ENCODE measurements at regions of chr11 and their contacts with region 1.

Region 1: GRCh38 chr11:76680518-76681425 is 10.2 kb upstream of the LRRC32 start:
- DNase-seq: peak; percentile 82
- H3K4me3 ChIP-seq: no peak overlapping the region
- H3K27ac ChIP-seq: no peak overlapping the region
- H3K4me1 ChIP-seq: no peaks in the 10 kb centered on the region
- H3K27me3 ChIP-seq: no peaks in the 10 kb centered on the region; the same call in 1 of the 2 replicates

Region 2: DNA sequence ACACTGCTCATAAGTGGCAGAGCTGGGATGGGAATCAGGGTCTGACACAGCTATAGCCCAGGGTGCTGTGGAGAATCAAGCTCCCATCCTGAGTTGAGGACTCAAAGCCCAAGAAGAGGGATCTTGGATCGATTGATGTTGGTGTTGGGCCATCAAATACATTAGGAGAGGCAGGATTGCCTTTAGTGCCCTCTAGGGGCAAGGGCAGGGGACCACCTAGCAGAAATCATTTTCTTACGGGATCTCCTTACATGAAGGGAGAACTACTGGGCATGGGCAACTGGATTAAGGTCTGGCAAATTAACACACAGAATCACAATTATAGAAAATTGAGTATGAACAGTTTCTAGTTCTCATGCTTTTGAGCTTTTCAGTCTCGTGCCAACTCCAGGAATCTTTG is 260.9 kb before region 1 on chr11:
- in situ Hi-C with region 1: no loop called
- DNase-seq: peak; percentile 3
- H3K4me3 ChIP-seq: no peak overlapping the region
- H3K27ac ChIP-seq: no peak overlapping the region
- H3K4me1 ChIP-seq: no peaks in the 10 kb centered on the region
- H3K27me3 ChIP-seq: peaks cover 12% of the 10 kb centered on the region; the same call in 1 of the 2 replicates

Region 3: DNA sequence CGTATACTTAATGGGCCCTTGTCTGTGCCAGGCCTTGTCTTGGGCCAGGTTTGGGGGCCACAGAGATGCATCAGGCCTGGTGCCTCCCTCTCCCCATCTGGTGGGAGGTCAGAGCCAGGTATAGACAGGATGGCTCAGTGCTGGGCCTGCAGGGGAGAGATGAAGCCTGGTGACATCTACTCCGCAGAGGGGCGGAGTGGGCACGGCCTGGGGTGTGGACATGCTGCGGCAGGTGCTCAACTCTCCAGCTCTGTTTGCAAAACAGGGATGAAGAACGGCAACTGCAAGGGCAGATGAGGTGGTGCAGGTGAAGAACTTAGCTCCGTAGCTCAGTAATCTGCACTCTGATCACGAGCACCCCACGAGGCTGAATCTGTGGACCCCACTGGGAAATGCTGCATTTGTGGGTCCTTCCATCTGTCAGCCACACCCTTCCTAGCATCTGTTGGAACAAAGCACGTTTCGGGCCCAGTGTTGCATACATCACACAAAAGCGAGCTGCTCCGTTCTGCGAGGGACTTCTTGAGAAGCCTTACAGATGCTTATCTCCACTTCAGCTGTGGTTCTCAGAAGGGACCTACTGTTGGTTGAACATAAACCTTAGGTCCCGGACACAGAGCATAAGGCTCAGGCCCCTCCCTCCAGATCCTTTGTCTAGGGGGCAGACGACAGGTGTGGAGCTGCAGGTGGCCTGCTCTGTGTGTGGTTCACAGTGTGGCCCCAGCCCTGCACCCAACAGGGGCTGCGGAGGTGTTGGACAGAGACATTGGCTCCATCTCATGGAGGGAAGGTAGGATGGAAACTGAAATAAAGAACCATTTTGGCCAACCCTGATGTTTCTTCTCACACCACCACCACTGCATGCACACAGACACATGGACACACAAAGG is 88.5 kb before region 1 on chr11:
- in situ Hi-C with region 1: loop called (anchors 5 kb)
- DNase-seq: no peak
- H3K4me3 ChIP-seq: no peak overlapping the region
- H3K27ac ChIP-seq: no peak overlapping the region
- H3K4me1 ChIP-seq: no peaks in the 10 kb centered on the region
- H3K27me3 ChIP-seq: no peaks in the 10 kb centered on the region; the same call in 1 of the 2 replicates

Region 4: DNA sequence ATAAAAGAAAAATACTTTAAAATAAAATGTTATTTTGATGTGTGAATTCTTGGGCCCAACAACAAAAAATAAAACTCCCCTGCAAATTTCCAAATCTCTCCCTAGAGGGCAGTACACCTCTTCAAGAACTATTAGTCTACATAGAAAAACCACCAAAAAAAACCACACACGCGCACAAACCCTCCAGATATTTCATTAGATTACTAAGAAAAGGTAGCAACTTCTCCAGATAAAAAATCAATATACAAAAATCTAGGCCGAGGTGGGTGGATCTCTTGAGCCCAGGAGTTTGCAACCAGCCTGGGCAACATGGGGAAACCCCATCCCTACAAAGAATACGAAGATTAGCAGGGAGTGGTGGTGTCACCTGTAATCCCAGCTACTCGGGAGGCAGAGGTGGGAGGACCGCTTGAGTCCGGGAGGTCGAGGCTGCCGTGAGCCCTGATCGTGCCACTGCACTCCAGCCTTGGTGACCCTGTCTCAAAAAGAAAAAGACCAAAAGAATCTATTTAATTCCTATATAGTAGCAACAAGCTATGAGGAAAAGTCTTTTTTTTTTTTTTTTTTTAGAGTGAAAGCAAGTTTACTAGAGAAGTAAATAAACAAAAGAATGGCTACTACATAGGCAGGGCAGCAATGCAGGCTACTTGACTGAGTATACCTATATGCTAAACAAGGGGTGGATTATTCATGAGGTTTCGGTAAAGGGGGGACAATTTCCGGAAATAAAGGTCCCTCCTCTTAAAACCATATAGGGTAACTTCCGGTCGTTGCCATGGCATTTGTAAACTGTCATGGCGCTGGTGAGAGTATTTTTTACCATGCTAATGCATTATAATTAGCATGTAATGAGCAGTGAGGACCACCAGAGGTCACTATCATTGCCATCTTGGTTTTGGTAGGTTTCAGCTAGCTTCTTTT is 366.5 kb after region 1 on chr11:
- in situ Hi-C with region 1: no loop called
- DNase-seq: peak; percentile 92
- H3K4me3 ChIP-seq: peak overlapping the region; percentile 78
- H3K27ac ChIP-seq: no peak overlapping the region
- H3K4me1 ChIP-seq: no peaks in the 10 kb centered on the region; the same call in 1 of the 2 replicates
- H3K27me3 ChIP-seq: no peaks in the 10 kb centered on the region

Measured in GM23248 (cell line).